CD8-positive, alpha-beta memory T cell (primary cell): ENCODE measurements at regions of chr16 and their contacts with region 1.

Region 1: DNA sequence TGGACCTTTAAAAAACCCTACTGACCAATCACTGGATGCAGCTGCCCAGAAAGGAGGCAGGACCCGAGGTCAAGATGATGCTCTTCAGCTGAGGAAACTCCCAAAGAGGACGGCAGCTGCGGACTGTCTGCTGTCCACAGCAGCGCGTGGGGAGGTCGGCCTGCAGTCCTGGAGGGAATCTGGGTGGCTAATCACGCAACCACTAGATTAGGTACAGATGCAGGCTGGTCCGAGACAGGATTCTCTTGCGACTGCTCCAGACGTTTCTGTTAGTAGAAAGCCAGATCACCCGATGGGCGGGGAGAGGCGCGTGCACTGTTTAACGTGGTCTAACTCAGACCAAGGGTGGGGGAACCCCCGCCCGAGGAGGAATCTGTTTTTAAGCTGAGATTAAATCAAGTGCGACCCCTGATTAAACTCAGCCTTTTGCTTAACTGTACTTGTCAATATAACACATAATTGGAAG is 8.8 kb downstream of the CTRB2 start:
- DNase-seq: no peak
- H3K4me3 ChIP-seq: no peak overlapping the region
- H3K4me3 Mint-ChIP-seq: no peak overlapping the region
- H3K27ac ChIP-seq: no peak overlapping the region
- H3K27ac Mint-ChIP-seq: no peak overlapping the region
- H3K4me1 ChIP-seq: peaks cover 17% of the 10 kb centered on the region
- H3K4me1 Mint-ChIP-seq: peaks cover 11 to 15% (median 14%) of the 10 kb centered on the region in 3 donors
- H3K27me3 ChIP-seq: no peaks in the 10 kb centered on the region
- H3K27me3 Mint-ChIP-seq: peaks cover 7 to 22% of the 10 kb centered on the region in 2 donors

Region 2: DNA sequence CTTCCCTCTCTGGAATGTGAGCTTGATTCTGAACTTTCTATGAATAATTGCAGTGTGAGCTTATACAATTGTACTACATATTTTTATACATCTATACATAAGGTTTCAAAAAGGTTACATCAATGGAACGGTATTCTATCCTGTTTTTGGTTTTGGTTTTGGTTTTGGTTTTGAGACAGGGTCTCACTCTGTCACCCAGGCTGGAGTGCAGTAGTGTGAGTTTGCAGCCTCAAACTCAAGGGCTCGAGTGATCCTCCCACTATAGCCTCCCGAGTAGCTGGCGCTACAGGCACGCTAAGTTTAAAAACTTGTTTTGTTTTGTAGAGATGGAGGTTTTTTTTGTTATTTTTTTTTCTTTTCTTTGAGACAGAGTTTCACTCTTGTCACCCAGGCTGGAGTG is 21.7 kb after region 1 on chr16:
- CTCF ChIA-PET with region 1: interaction called, 16 read pairs
- POLR2A ChIA-PET with region 1: no interaction called
- DNase-seq: peak in 1 of 5 donors; percentile 24
- H3K4me3 ChIP-seq: peak overlapping the region; percentile 59
- H3K4me3 Mint-ChIP-seq: peak overlapping the region; percentile 73 to 93 (median 85)
- H3K27ac ChIP-seq: no peak overlapping the region
- H3K27ac Mint-ChIP-seq: peak overlapping the region; percentile 41 to 93 (median 87)
- H3K4me1 ChIP-seq: peaks cover 9% of the 10 kb centered on the region
- H3K4me1 Mint-ChIP-seq: peaks cover 7 to 16% (median 15%) of the 10 kb centered on the region in 3 donors
- H3K27me3 ChIP-seq: no peaks in the 10 kb centered on the region
- H3K27me3 Mint-ChIP-seq: peaks cover 0 to 2% of the 10 kb centered on the region in 2 donors

Region 3: DNA sequence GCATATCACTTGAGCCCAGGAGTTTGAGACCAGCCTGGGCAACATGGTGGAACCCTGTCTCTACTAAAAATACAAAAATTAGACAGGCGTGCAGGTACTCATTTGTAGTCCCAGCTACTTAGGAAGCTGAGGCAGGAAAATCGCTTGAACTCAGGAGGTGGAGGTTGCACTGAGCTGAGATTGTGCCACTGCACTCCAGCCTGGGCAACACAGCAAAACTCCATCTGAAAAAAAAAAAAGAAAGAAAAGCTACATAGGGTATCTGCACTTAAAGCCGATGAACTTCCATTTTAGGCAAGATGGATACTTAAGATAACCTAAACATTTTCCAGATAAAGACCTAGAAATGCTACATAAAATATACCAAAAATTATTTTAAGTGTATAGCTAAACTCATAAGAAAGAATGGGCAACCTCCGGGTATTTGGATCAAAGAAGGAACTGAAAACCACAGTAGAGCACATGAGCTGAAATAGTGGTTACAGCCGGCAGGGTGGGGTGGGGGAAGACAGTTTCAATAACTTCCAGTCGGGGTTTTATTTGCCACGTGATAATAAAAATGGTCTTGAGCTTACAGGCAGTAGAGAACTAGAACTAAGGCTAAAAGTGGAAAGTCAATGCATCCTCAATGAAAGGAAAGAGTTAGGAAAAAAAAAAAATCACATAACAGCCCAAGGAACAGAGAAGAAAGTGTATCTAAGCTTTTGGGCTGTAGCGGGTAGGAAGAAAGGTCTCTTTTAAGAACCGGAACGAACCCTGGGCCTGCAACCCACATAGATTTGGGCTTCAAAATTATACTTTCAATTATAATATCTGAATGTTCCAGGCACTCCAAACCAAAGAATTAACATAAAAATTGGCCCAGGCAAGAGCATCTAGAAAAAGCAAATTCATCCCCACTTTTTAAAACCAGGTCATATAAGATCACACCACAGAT is 182.0 kb after region 1 on chr16:
- CTCF ChIA-PET with region 1: interaction called, 25 read pairs
- POLR2A ChIA-PET with region 1: interaction called, 3 read pairs
- DNase-seq: peak in 3 of 5 donors; percentile 35 to 59 (median 57)
- H3K4me3 ChIP-seq: no peak overlapping the region
- H3K4me3 Mint-ChIP-seq: peak overlapping the region; percentile 33 to 87 (median 74)
- H3K27ac ChIP-seq: no peak overlapping the region
- H3K27ac Mint-ChIP-seq: peak overlapping the region; percentile 6 to 90 (median 76)
- H3K4me1 ChIP-seq: peaks cover 42% of the 10 kb centered on the region
- H3K4me1 Mint-ChIP-seq: peaks cover 34 to 46% (median 37%) of the 10 kb centered on the region in 3 donors
- H3K27me3 ChIP-seq: no peaks in the 10 kb centered on the region
- H3K27me3 Mint-ChIP-seq: no peaks in the 10 kb centered on the region

Region 4: GRCh38 chr16:75385507-75386152 is 187.5 kb after region 1 on chr16:
- CTCF ChIA-PET with region 1: interaction called, 25 read pairs
- POLR2A ChIA-PET with region 1: interaction called, 3 read pairs
- DNase-seq: peak in 2 of 5 donors; percentile 45
- H3K4me3 ChIP-seq: no peak overlapping the region
- H3K4me3 Mint-ChIP-seq: no peak overlapping the region
- H3K27ac ChIP-seq: no peak overlapping the region
- H3K27ac Mint-ChIP-seq: no peak overlapping the region
- H3K4me1 ChIP-seq: peaks cover 23% of the 10 kb centered on the region
- H3K4me1 Mint-ChIP-seq: peaks cover 12 to 23% (median 21%) of the 10 kb centered on the region in 3 donors
- H3K27me3 ChIP-seq: no peaks in the 10 kb centered on the region
- H3K27me3 Mint-ChIP-seq: no peaks in the 10 kb centered on the region

Region 5: GRCh38 chr16:75402821-75403475 is 204.8 kb after region 1 on chr16:
- CTCF ChIA-PET with region 1: interaction called, 27 read pairs
- POLR2A ChIA-PET with region 1: no interaction called
- DNase-seq: peak in 1 of 5 donors; percentile 27
- H3K4me3 ChIP-seq: no peak overlapping the region
- H3K4me3 Mint-ChIP-seq: no peak overlapping the region
- H3K27ac ChIP-seq: no peak overlapping the region
- H3K27ac Mint-ChIP-seq: peak overlapping the region in 1 of 8 donors; percentile 26
- H3K4me1 ChIP-seq: no peaks in the 10 kb centered on the region
- H3K4me1 Mint-ChIP-seq: peaks cover 0 to 2% (median 0%) of the 10 kb centered on the region in 3 donors
- H3K27me3 ChIP-seq: no peaks in the 10 kb centered on the region
- H3K27me3 Mint-ChIP-seq: no peaks in the 10 kb centered on the region